ENCODE measurements at regions of chr9 and their contacts with region 1.

Region 1: DNA sequence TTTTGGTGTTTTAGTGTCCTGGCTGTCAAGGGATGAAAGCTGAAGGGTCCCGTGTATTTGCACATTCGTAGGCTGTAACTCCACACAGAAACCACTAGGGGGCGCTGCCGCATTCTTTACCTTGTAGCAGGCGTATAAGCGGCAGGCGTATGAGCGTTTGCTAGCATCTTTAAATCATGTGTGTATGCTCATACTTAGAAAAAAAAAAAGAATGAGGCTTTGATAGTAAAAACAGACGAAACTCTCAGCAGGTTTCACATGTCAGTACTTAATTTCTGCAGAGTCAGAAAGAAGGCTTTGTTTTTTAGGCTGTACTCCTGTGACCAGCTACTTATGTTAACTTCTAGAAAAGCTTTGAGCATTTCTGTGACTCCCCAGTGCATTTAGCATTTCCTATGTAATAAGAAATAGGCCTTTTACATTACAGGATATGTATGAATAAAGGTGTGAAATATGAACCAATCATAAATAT is 218.8 kb upstream of the ADAMTSL1 start:
- DNase-seq: peak; percentile 30 to 72 (median 57)
- ATAC-seq: peak; percentile 87
- H3K4me3 ChIP-seq: no peak overlapping the region
- H3K4me3 Mint-ChIP-seq: no peak overlapping the region
- H3K27ac ChIP-seq: no peak overlapping the region
- H3K27ac Mint-ChIP-seq: no peak overlapping the region
- H3K4me1 ChIP-seq: no peaks in the 10 kb centered on the region
- H3K4me1 Mint-ChIP-seq: peaks cover 0 to 6% (median 0%) of the 10 kb centered on the region in 7 donors
- H3K27me3 ChIP-seq: no peaks in the 10 kb centered on the region
- H3K27me3 Mint-ChIP-seq: peaks cover 11 to 16% (median 11%) of the 10 kb centered on the region in 5 donors

Region 2: DNA sequence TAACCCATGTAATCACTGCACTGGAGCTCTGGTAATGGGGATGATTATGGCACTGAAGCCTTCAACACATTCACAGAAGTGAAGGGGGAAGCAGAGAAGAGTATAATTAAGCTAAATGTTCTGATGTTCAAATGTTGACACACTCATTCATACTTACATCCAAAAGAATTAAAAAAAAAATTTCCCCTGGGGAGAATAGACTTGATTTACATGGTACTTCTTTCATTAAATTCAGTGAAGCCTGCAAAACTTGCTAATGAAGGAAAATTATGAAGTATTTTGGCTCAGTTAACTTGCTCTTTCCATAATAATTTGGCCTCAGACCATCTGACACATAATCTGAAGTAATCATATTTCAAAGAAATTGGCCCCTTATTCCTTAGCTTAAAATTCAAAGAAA is 247.6 kb before region 1 on chr9:
- CTCF ChIA-PET with region 1: no interaction called
- POLR2A ChIA-PET with region 1: no interaction called
- intact Hi-C with region 1: no loop called
- DNase-seq: no peak
- ATAC-seq: no peak
- H3K4me3 ChIP-seq: no peak overlapping the region
- H3K4me3 Mint-ChIP-seq: no peak overlapping the region
- H3K27ac ChIP-seq: no peak overlapping the region
- H3K27ac Mint-ChIP-seq: no peak overlapping the region
- H3K4me1 ChIP-seq: no peaks in the 10 kb centered on the region
- H3K4me1 Mint-ChIP-seq: no peaks in the 10 kb centered on the region
- H3K27me3 ChIP-seq: no peaks in the 10 kb centered on the region
- H3K27me3 Mint-ChIP-seq: no peaks in the 10 kb centered on the region

Region 3: GRCh38 chr9:18281291-18281690 is 26.1 kb after region 1 on chr9:
- CTCF ChIA-PET with region 1: no interaction called
- POLR2A ChIA-PET with region 1: no interaction called
- intact Hi-C with region 1: loop called in 1 of 2 experiments (anchors 1 kb)
- DNase-seq: no peak
- ATAC-seq: no peak
- H3K4me3 ChIP-seq: no peak overlapping the region
- H3K4me3 Mint-ChIP-seq: no peak overlapping the region
- H3K27ac ChIP-seq: no peak overlapping the region
- H3K27ac Mint-ChIP-seq: no peak overlapping the region
- H3K4me1 ChIP-seq: no peaks in the 10 kb centered on the region
- H3K4me1 Mint-ChIP-seq: no peaks in the 10 kb centered on the region
- H3K27me3 ChIP-seq: no peaks in the 10 kb centered on the region
- H3K27me3 Mint-ChIP-seq: peaks cover 0 to 19% (median 6%) of the 10 kb centered on the region in 5 donors

Region 4: GRCh38 chr9:18442629-18443491 is 187.7 kb after region 1 on chr9:
- CTCF ChIA-PET with region 1: no interaction called
- POLR2A ChIA-PET with region 1: no interaction called
- intact Hi-C with region 1: loop called (anchors 1 to 5 kb)
- DNase-seq: peak in 5 of 9 donors; percentile 12 to 47 (median 25)
- ATAC-seq: peak; percentile 64
- H3K4me3 ChIP-seq: no peak overlapping the region
- H3K4me3 Mint-ChIP-seq: no peak overlapping the region
- H3K27ac ChIP-seq: no peak overlapping the region
- H3K27ac Mint-ChIP-seq: no peak overlapping the region
- H3K4me1 ChIP-seq: no peaks in the 10 kb centered on the region
- H3K4me1 Mint-ChIP-seq: peaks cover 0 to 5% (median 0%) of the 10 kb centered on the region in 7 donors
- H3K27me3 ChIP-seq: no peaks in the 10 kb centered on the region
- H3K27me3 Mint-ChIP-seq: peaks cover 12 to 28% (median 16%) of the 10 kb centered on the region in 5 donors

Region 5: DNA sequence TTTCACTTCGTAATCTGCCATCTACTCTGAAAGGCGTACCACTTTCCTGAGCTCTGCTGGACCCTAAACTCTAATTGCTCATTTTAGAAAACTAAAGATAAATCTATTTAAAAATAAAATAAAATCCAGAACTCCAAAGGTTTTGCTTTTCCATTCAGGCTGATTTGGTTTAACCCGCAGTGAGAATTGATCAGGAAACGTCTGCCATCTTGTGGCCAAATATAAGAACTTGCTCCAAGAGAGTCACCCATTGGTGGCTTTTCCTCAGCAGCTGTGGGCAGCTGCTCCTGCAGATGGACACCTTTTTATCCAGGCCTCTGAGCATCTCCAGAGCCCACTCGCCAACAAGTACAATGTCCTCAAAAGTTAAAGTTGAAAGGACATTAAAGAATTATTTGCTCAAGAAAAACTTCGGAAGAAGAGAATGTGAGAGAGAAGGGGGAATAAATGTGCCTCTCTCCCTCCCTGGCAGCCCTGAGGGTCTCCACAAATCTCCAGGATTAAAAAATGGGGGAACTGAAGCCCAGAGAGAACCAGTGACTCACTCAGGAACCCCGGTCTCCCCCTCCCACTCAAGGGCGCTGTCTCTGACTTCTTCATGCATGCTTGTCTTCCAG is 773.7 kb after region 1 on chr9:
- CTCF ChIA-PET with region 1: interaction called, 3 read pairs
- POLR2A ChIA-PET with region 1: no interaction called
- intact Hi-C with region 1: loop called (anchors 1 kb)
- DNase-seq: peak in 5 of 9 donors; percentile 17 to 37 (median 34)
- ATAC-seq: peak; percentile 54
- H3K4me3 ChIP-seq: no peak overlapping the region
- H3K4me3 Mint-ChIP-seq: no peak overlapping the region
- H3K27ac ChIP-seq: no peak overlapping the region
- H3K27ac Mint-ChIP-seq: no peak overlapping the region
- H3K4me1 ChIP-seq: no peaks in the 10 kb centered on the region
- H3K4me1 Mint-ChIP-seq: peaks cover 0 to 8% (median 0%) of the 10 kb centered on the region in 7 donors
- H3K27me3 ChIP-seq: no peaks in the 10 kb centered on the region
- H3K27me3 Mint-ChIP-seq: peaks cover 11 to 19% (median 13%) of the 10 kb centered on the region in 5 donors

Region 6: GRCh38 chr9:19239955-19240354 is 984.8 kb after region 1 on chr9:
- CTCF ChIA-PET with region 1: no interaction called
- POLR2A ChIA-PET with region 1: no interaction called
- intact Hi-C with region 1: no loop called
- DNase-seq: no peak
- ATAC-seq: no peak
- H3K4me3 ChIP-seq: no peak overlapping the region
- H3K4me3 Mint-ChIP-seq: peak overlapping the region in 2 of 10 donors; percentile 8 to 30
- H3K27ac ChIP-seq: no peak overlapping the region
- H3K27ac Mint-ChIP-seq: no peak overlapping the region
- H3K4me1 ChIP-seq: peaks cover 1 to 15% of the 10 kb centered on the region in 2 donors
- H3K4me1 Mint-ChIP-seq: peaks cover 19 to 64% (median 49%) of the 10 kb centered on the region in 7 donors
- H3K27me3 ChIP-seq: no peaks in the 10 kb centered on the region
- H3K27me3 Mint-ChIP-seq: no peaks in the 10 kb centered on the region

Measured in naive thymus-derived CD4-positive, alpha-beta T cell (primary cell).